HEK293T (cell line): ENCODE measurements at regions of chr9 and their contacts with region 1.

Region 1: GRCh38 chr9:125706661-125707471 is at the start of gene MAPKAP1:
- DNase-seq: peak; percentile 100

Region 2: GRCh38 chr9:125681086-125681622 is 25.7 kb before region 1 on chr9:
- CTCF ChIA-PET with region 1: no interaction called
- POLR2A ChIA-PET with region 1: interaction called, 10 read pairs
- DNase-seq: peak; percentile 18

Region 3: GRCh38 chr9:125911861-125912644 is 205.2 kb after region 1 on chr9:
- CTCF ChIA-PET with region 1: no interaction called
- POLR2A ChIA-PET with region 1: no interaction called
- DNase-seq: no peak